ENCODE measurements at regions of chr6 and their contacts with region 1.

Region 1: GRCh38 chr6:40108736-40109135 is 174.5 kb upstream of the MOCS1 start:
- DNase-seq: no peak
- ATAC-seq: no peak
- H3K4me3 ChIP-seq: no peak overlapping the region
- H3K27ac ChIP-seq: no peak overlapping the region
- H3K4me1 ChIP-seq: no peaks in the 10 kb centered on the region
- H3K27me3 ChIP-seq: no peaks in the 10 kb centered on the region
- CTCF ChIP-seq: no peak
- EP300 ChIP-seq: no peak
- POLR2A ChIP-seq: no peak
- RAD21 ChIP-seq: no peak

Region 2: DNA sequence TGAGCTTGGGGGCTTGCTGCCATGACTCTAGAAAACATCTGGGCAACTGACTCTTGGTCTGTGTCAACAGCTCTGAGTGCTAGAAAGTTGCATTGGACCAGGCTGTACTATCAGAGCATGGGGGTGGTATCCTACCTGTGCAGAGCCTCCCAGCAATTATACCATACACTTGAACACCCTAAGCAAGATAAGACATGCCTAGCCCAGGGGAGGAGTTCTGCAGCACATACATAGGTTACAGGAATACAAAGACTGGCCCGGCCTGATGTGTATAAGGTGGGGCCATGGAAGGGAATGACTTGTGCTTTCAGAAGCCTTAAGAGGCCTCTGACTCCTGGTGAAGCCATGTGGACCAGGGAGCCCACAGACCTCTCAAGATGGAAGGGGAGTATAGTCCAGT is 163.1 kb before region 1 on chr6:
- CTCF ChIA-PET with region 1: no interaction called
- POLR2A ChIA-PET with region 1: no interaction called
- RAD21 ChIA-PET with region 1: no interaction called
- SMC1A ChIA-PET with region 1: no interaction called
- in situ Hi-C with region 1: no loop called
- intact Hi-C with region 1: no loop called
- DNase-seq: no peak
- ATAC-seq: no peak
- H3K4me3 ChIP-seq: no peak overlapping the region
- H3K27ac ChIP-seq: no peak overlapping the region
- H3K4me1 ChIP-seq: no peaks in the 10 kb centered on the region
- H3K27me3 ChIP-seq: peaks cover 0 to 3% of the 10 kb centered on the region in 2 experiments; a peak in 1 of 4 replicates
- CTCF ChIP-seq: no peak
- EP300 ChIP-seq: no peak
- POLR2A ChIP-seq: no peak
- RAD21 ChIP-seq: no peak

Region 3: GRCh38 chr6:40125680-40126394 is 17.1 kb after region 1 on chr6:
- CTCF ChIA-PET with region 1: interaction called, 10 read pairs
- POLR2A ChIA-PET with region 1: interaction called, 3 read pairs
- RAD21 ChIA-PET with region 1: interaction called, 4 read pairs
- SMC1A ChIA-PET with region 1: interaction called, 6 read pairs
- in situ Hi-C with region 1: no loop called
- intact Hi-C with region 1: no loop called
- DNase-seq: no peak
- ATAC-seq: no peak
- H3K4me3 ChIP-seq: no peak overlapping the region
- H3K27ac ChIP-seq: no peak overlapping the region
- H3K4me1 ChIP-seq: no peaks in the 10 kb centered on the region
- H3K27me3 ChIP-seq: no peaks in the 10 kb centered on the region
- CTCF ChIP-seq: no peak
- EP300 ChIP-seq: no peak
- POLR2A ChIP-seq: no peak
- RAD21 ChIP-seq: no peak

Measured in GM12878 (cell line).